CD8-positive, alpha-beta T cell (primary cell): ENCODE measurements at regions of chr6 and their contacts with region 1.

Region 1: DNA sequence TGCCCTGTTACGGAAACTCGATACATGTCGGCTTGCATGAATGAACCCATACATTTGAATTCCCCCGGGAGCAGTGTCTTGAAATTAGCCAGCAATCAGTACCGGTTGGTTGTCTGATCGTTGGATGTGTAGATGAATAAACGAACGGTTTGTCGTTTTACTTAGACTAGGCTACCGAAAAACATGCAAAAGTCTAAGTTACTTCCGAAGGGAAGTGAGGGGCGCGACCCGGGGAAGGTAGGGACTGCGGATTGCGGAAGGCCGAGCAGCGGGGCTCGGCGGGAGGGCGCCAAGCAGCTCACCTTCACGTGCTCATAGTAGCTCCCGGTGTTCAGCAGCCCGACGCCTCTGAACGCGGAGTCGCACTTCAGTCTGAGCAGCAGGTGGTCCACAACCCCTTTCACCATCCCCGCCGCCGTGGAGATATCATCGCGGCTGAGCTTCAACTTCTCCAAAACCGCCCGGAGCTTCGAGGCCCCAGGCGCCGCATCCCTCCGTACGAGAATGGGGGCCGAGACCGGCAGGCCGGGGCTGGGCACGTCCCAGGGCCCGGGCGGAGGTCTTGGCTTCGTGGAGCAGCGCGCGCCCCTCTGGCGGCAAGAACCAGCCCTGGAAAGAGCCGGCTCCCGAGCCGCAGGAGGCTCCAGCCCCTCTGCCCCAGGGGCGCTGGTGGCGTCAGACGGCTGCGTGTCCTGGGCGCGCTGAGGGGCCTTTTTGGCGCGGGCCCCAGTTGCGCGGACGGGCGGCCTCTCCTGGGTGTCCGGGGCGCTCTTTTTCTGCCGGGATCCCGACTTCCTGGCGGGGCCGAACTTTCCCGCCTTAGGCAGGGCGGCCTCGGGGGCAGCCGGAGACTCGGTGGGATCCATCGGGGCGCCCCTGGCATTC is 632 bp downstream of the CGAS start:
- DNase-seq: peak in 8 of 9 experiments; percentile 18 to 71 (median 52)
- ATAC-seq: peak; percentile 61
- H3K4me3 ChIP-seq: peak overlapping the region; percentile 67 to 91
- H3K4me3 Mint-ChIP-seq: peak overlapping the region; percentile 88
- H3K27ac ChIP-seq: peak overlapping the region; percentile 64 to 81
- H3K27ac Mint-ChIP-seq: peak overlapping the region; percentile 82
- H3K4me1 ChIP-seq: peaks cover 22% of the 10 kb centered on the region
- H3K4me1 Mint-ChIP-seq: peaks cover 28% of the 10 kb centered on the region
- H3K27me3 ChIP-seq: no peaks in the 10 kb centered on the region
- H3K27me3 Mint-ChIP-seq: no peaks in the 10 kb centered on the region
- CTCF ChIP-seq: no peak

Region 2: GRCh38 chr6:73388800-73389512 is 62.5 kb before region 1 on chr6:
- CTCF ChIA-PET with region 1: interaction called, 3 read pairs
- POLR2A ChIA-PET with region 1: no interaction called
- intact Hi-C with region 1: loop called in 1 of 2 experiments (anchors 2 kb)
- DNase-seq: peak in 8 of 9 experiments; percentile 38 to 76 (median 57)
- ATAC-seq: peak; percentile 71
- H3K4me3 ChIP-seq: peak overlapping the region; percentile 54 to 67
- H3K4me3 Mint-ChIP-seq: peak overlapping the region; percentile 78
- H3K27ac ChIP-seq: peak overlapping the region; percentile 28 to 72
- H3K27ac Mint-ChIP-seq: peak overlapping the region; percentile 45
- H3K4me1 ChIP-seq: peaks cover 4% of the 10 kb centered on the region
- H3K4me1 Mint-ChIP-seq: peaks cover 12% of the 10 kb centered on the region
- H3K27me3 ChIP-seq: no peaks in the 10 kb centered on the region
- H3K27me3 Mint-ChIP-seq: no peaks in the 10 kb centered on the region
- CTCF ChIP-seq: no peak

Region 3: DNA sequence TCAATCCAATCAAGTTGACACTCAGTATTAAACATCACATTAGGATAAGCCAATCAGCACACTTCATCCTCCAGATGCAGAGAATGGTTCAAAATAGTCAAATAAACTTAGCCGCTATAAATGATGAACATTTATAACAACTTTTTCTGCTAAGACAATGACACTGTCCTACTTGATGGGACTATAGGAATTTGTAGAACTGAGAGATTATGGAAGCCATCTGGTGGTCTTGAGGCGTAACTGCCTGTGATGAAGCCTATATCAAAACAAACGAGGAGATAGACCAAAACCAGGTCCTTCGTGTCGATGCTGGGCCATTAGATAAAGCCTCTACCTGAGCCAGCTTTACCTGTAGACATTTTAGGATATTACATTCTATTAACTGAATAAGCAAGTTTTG is 1123.3 kb after region 1 on chr6:
- CTCF ChIA-PET with region 1: no interaction called
- POLR2A ChIA-PET with region 1: no interaction called
- intact Hi-C with region 1: no loop called
- DNase-seq: peak in 1 of 9 experiments; percentile 5
- ATAC-seq: no peak
- H3K4me3 ChIP-seq: no peak overlapping the region
- H3K4me3 Mint-ChIP-seq: no peak overlapping the region
- H3K27ac ChIP-seq: no peak overlapping the region
- H3K27ac Mint-ChIP-seq: no peak overlapping the region
- H3K4me1 ChIP-seq: no peaks in the 10 kb centered on the region
- H3K4me1 Mint-ChIP-seq: no peaks in the 10 kb centered on the region
- H3K27me3 ChIP-seq: no peaks in the 10 kb centered on the region
- H3K27me3 Mint-ChIP-seq: no peaks in the 10 kb centered on the region
- CTCF ChIP-seq: no peak

Region 4: GRCh38 chr6:75243333-75244062 is 1792.0 kb after region 1 on chr6 and contains the start of gene COX7A2:
- CTCF ChIA-PET with region 1: no interaction called
- POLR2A ChIA-PET with region 1: no interaction called
- intact Hi-C with region 1: loop called in 1 of 2 experiments (anchors 10 kb)
- DNase-seq: peak; percentile 71 to 94 (median 87)
- ATAC-seq: peak; percentile 94
- H3K4me3 ChIP-seq: peak within 1 kb of the TSS; percentile 94 to 98
- H3K4me3 Mint-ChIP-seq: peak within 1 kb of the TSS; percentile 99
- H3K27ac ChIP-seq: peak within 1 kb of the TSS; percentile 93 to 97
- H3K27ac Mint-ChIP-seq: peak within 1 kb of the TSS; percentile 100
- H3K4me1 ChIP-seq: peaks cover 6% of the 10 kb centered on the region
- H3K4me1 Mint-ChIP-seq: peaks cover 36% of the 10 kb centered on the region
- H3K27me3 ChIP-seq: no peaks in the 10 kb centered on the region
- H3K27me3 Mint-ChIP-seq: peaks cover 6% of the 10 kb centered on the region
- CTCF ChIP-seq: no peak
- total RNA-seq, gene COX7A2: 221 to 229 TPM